ENCODE measurements at regions of chr13 and their contacts with region 1.

Region 1: GRCh38 chr13:110915057-110915873 is at the start of gene ANKRD10:
- DNase-seq: peak; percentile 98
- H3K4me3 Mint-ChIP-seq: peak within 1 kb of the TSS; percentile 67
- H3K27ac Mint-ChIP-seq: peak within 1 kb of the TSS; percentile 80
- H3K4me1 Mint-ChIP-seq: peaks cover 19% of the 10 kb centered on the region
- H3K27me3 Mint-ChIP-seq: no peaks in the 10 kb centered on the region
- CTCF ChIP-seq: peak; percentile 75
- total RNA-seq, gene ANKRD10: 61.7 and 76.0 TPM in 2 replicates

Region 2: GRCh38 chr13:109715902-109716301 is 1199.4 kb before region 1 on chr13:
- CTCF ChIA-PET with region 1: no interaction called
- POLR2A ChIA-PET with region 1: no interaction called
- intact Hi-C with region 1: no loop called
- DNase-seq: peak; percentile 78
- H3K4me3 Mint-ChIP-seq: no peak overlapping the region
- H3K27ac Mint-ChIP-seq: no peak overlapping the region
- H3K4me1 Mint-ChIP-seq: peaks cover 9% of the 10 kb centered on the region
- H3K27me3 Mint-ChIP-seq: no peaks in the 10 kb centered on the region
- CTCF ChIP-seq: no peak

Region 3: DNA sequence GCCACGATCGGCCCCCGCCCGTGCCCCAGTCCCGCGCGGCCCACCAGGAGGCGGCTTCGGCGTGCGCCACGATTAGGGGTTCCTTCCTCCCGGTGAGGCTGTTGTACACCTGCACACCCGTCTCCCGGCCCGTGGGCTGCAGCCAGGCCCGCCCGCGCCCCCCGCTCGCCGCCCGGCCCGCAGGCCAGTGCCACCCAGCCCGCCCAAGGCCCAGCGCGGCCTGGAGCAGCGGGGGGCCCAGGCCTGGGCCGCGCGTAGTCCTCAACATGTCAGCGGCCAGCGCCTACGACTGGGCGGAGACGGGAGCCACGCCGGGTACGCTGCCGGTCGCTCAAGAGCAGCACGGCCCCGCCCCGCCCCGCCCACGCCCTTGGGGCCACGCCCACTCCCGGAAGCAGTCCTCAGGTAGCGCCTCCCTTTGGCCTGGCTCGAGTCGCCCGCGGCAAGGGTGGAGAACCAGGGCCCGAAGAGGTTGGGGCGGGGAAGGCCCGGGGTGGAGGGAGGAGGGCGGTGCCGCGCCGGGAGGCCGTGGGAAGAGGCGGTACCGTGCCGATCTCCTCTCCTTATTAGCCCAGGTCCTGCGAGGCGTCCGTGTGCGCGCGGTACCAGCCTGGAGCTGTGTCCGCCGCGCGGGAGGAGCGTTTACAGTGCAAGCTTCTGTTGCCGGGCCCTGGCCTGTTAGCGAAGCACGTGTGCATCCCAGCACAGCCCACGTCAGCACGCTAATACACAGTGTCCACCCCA is 209.3 kb before region 1 on chr13 and contains the start of gene CARS2:
- CTCF ChIA-PET with region 1: interaction called, 4 read pairs
- POLR2A ChIA-PET with region 1: interaction called, 34 read pairs
- intact Hi-C with region 1: no loop called
- DNase-seq: peak; percentile 98
- H3K4me3 Mint-ChIP-seq: peak within 1 kb of the TSS; percentile 82
- H3K27ac Mint-ChIP-seq: peak within 1 kb of the TSS; percentile 70
- H3K4me1 Mint-ChIP-seq: peaks cover 21% of the 10 kb centered on the region
- H3K27me3 Mint-ChIP-seq: no peaks in the 10 kb centered on the region
- CTCF ChIP-seq: no peak
- total RNA-seq, gene CARS2: 104 and 121 TPM in 2 replicates

Region 4: GRCh38 chr13:110869805-110870706 is 45.2 kb before region 1 on chr13:
- CTCF ChIA-PET with region 1: interaction called, 3 read pairs
- POLR2A ChIA-PET with region 1: interaction called, 38 read pairs
- intact Hi-C with region 1: loop called (anchors 1 kb)
- DNase-seq: peak; percentile 100
- H3K4me3 Mint-ChIP-seq: peak overlapping the region; percentile 62
- H3K27ac Mint-ChIP-seq: peak overlapping the region; percentile 88
- H3K4me1 Mint-ChIP-seq: peaks cover 12% of the 10 kb centered on the region
- H3K27me3 Mint-ChIP-seq: no peaks in the 10 kb centered on the region
- CTCF ChIP-seq: peak; percentile 13

Region 5: GRCh38 chr13:110965038-110965754 is 49.9 kb after region 1 on chr13:
- CTCF ChIA-PET with region 1: interaction called, 4 read pairs
- POLR2A ChIA-PET with region 1: interaction called, 3 read pairs
- intact Hi-C with region 1: loop called (anchors 5 kb)
- DNase-seq: peak; percentile 97
- H3K4me3 Mint-ChIP-seq: no peak overlapping the region
- H3K27ac Mint-ChIP-seq: peak overlapping the region; percentile 50
- H3K4me1 Mint-ChIP-seq: peaks cover 11% of the 10 kb centered on the region
- H3K27me3 Mint-ChIP-seq: no peaks in the 10 kb centered on the region
- CTCF ChIP-seq: no peak

Region 6: GRCh38 chr13:111153279-111153976 is 238.2 kb after region 1 on chr13:
- CTCF ChIA-PET with region 1: no interaction called
- POLR2A ChIA-PET with region 1: no interaction called
- intact Hi-C with region 1: loop called (anchors 10 kb)
- DNase-seq: peak; percentile 90
- H3K4me3 Mint-ChIP-seq: peak overlapping the region; percentile 93
- H3K27ac Mint-ChIP-seq: peak overlapping the region; percentile 98
- H3K4me1 Mint-ChIP-seq: peaks cover 11% of the 10 kb centered on the region
- H3K27me3 Mint-ChIP-seq: peaks cover 34% of the 10 kb centered on the region
- CTCF ChIP-seq: peak; percentile 11

Measured in MCF 10A (cell line).